A549 (cell line): ENCODE measurements at regions of chr18 and their contacts with region 1.

Region 1: DNA sequence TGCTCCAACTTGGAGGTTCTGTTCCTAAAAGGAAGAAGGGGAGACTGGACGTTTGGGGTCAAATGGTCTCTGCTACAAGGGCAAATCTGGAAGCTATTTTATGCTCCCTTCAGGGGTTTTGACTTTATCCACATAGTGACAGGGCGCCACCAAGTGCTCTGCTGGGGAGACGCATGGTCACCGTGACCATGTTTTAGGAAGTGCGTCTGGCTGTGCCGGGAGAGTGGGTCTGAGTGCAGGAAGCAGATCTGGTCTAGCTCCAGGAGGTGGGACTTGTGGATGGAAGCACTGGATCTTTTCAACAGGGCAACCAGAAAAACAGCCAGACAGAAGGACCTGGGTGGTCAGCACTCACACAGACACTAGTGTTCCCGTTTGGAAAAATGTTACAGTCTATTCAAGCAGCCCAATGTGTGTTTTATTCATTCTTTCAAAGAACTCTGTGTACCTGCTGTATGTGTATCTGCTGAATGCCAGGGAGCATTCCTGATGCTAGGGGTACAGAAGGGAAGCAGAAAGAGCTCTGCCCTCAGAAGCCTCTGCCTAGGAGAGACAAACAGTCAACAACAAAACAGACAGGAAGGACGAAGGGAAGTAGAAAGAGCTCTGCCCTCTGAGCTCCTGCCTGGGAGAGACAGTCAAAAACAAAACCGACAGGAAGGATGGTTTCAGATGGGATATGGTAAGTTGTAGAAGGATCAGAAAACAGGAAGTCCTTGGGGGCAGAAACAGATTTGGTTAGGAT is 14.3 kb downstream of the IMPA2 start:
- DNase-seq: peak; percentile 63 to 77
- ATAC-seq: peak; percentile 85 to 86
- H3K4me3 ChIP-seq: peak overlapping the region; percentile 24; the same call in 2 of the 3 replicates
- H3K27ac ChIP-seq: peak overlapping the region; percentile 85 to 96
- H3K4me1 ChIP-seq: peaks cover 44% of the 10 kb centered on the region
- CTCF ChIP-seq: peak; percentile 77
- EP300 ChIP-seq: no peak
- POLR2A ChIP-seq: no peak
- RAD21 ChIP-seq: peak; percentile 88 to 89

Region 2: DNA sequence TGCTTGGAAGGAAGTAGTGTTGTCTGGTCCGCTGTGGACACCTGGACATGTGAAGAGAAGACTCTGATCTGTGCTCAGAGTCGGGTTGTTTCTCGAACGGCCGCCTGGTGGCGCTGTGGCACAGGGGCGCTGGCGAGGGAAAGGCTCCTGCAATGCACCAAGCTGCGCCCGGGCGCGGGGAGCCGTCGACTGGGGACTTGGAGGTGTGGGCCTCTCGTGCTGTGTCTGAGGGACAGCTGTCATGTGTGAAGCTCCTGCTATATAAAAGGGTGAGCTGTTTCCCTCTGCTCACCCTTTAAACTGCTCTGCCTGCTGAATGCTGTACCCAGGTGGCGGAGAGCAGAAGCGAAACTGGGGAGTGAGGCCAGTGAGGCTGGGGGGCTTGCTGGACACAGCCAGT is 262.6 kb before region 1 on chr18:
- CTCF ChIA-PET with region 1: interaction called, 76 read pairs
- POLR2A ChIA-PET with region 1: no interaction called
- DNase-seq: peak; percentile 52 to 74
- ATAC-seq: peak; percentile 96 to 98
- H3K4me3 ChIP-seq: no peak overlapping the region
- H3K27ac ChIP-seq: peak overlapping the region; percentile 60 to 70; a peak in 4 of 6 replicates
- H3K4me1 ChIP-seq: 0 out of 3 replicates have a peak, but pooled peaks cover 3% of the 10 kb centered on the region
- CTCF ChIP-seq: peak; percentile 79
- EP300 ChIP-seq: no peak
- POLR2A ChIP-seq: no peak
- RAD21 ChIP-seq: peak; percentile 79 to 84

Region 3: GRCh38 chr18:11908182-11909060 is 87.2 kb before region 1 on chr18 and contains the start of gene MPPE1:
- CTCF ChIA-PET with region 1: interaction called, 14 read pairs
- POLR2A ChIA-PET with region 1: no interaction called
- DNase-seq: peak; percentile 73 to 83
- ATAC-seq: peak; percentile 95 to 96
- H3K4me3 ChIP-seq: peak within 1 kb of the TSS; percentile 50
- H3K27ac ChIP-seq: peak within 1 kb of the TSS; percentile 82 to 98
- H3K4me1 ChIP-seq: peaks cover 28% of the 10 kb centered on the region
- CTCF ChIP-seq: no peak
- EP300 ChIP-seq: no peak
- POLR2A ChIP-seq: peak; percentile 62
- RAD21 ChIP-seq: no peak
- polyA plus RNA-seq, gene MPPE1: 23.2 and 26.4 TPM in 2 replicates

Region 4: DNA sequence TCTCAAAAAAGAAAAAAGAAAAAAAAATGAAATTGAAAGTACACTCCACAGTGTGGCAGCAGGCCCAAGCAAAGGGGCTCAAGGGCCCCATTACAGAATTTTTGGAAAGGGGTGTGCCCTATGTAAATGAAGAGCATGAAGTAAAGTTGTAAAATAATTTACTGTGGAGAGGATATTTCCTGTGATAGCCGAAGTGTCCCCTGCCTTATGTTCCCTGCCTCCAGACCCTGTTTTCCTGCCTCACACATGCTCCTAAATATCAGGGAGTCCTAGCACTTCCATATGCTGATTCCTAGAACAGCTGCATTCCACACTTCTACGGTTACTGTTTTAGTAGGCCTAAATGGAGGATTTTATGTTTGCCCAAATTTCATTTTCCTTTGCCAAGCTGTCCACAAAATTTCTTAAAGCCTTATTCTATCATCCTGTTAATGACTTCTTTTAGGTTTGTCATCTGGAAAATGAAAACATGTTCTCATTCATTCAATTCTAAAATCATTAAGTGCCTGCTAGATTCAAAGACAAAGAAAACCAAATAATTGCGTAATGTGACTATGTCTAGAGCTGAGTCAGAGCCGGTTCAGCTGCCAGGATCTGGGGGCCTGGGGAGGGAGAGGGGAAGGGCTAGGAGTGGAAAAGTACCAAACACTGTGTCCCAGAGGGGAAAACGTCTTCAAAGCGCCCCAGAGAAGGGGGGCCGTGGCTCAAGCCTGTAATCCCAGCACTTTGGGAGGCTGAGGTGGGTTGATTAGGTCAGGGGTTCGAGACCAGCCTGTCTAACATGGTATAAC is 40.2 kb before region 1 on chr18:
- CTCF ChIA-PET with region 1: interaction called, 435 read pairs
- POLR2A ChIA-PET with region 1: no interaction called
- DNase-seq: peak in 1 of 2 experiments; percentile 79
- ATAC-seq: peak; percentile 74 to 75
- H3K4me3 ChIP-seq: no peak overlapping the region
- H3K27ac ChIP-seq: peak overlapping the region; percentile 74 to 85
- H3K4me1 ChIP-seq: peaks cover 10% of the 10 kb centered on the region
- CTCF ChIP-seq: no peak
- EP300 ChIP-seq: no peak
- POLR2A ChIP-seq: no peak
- RAD21 ChIP-seq: no peak

Region 5: GRCh38 chr18:12005538-12006487 is 10.2 kb after region 1 on chr18:
- CTCF ChIA-PET with region 1: interaction called, 34 read pairs
- POLR2A ChIA-PET with region 1: no interaction called
- DNase-seq: peak in 1 of 2 experiments; percentile 51
- ATAC-seq: peak; percentile 50 to 52; a peak in 4 of 6 replicates
- H3K4me3 ChIP-seq: no peak overlapping the region
- H3K27ac ChIP-seq: peak overlapping the region; percentile 32 to 56; a peak in 4 of 6 replicates
- H3K4me1 ChIP-seq: peaks cover 17% of the 10 kb centered on the region
- CTCF ChIP-seq: no peak
- EP300 ChIP-seq: no peak
- POLR2A ChIP-seq: no peak
- RAD21 ChIP-seq: no peak